Dorsolateral prefrontal cortex (tissue), 120 donors: ENCODE measurements at regions of chr11 and their contacts with region 1.

Region 1: GRCh38 chr11:119728651-119729580 is at the start of gene NECTIN1:
- DNase-seq: peak; percentile 80 to 92 (median 88)
- H3K4me3 ChIP-seq: peak within 1 kb of the TSS; percentile 61 to 95 (median 84)
- H3K27ac ChIP-seq: peak within 1 kb of the TSS; percentile 72 to 95 (median 90)
- H3K27me3 ChIP-seq: no peaks in the 10 kb centered on the region
- CTCF ChIP-seq: peak; percentile 77 to 99 (median 95)
- total RNA-seq, gene NECTIN1: 45.3 to 136 (median 78.1) TPM

Region 2: DNA sequence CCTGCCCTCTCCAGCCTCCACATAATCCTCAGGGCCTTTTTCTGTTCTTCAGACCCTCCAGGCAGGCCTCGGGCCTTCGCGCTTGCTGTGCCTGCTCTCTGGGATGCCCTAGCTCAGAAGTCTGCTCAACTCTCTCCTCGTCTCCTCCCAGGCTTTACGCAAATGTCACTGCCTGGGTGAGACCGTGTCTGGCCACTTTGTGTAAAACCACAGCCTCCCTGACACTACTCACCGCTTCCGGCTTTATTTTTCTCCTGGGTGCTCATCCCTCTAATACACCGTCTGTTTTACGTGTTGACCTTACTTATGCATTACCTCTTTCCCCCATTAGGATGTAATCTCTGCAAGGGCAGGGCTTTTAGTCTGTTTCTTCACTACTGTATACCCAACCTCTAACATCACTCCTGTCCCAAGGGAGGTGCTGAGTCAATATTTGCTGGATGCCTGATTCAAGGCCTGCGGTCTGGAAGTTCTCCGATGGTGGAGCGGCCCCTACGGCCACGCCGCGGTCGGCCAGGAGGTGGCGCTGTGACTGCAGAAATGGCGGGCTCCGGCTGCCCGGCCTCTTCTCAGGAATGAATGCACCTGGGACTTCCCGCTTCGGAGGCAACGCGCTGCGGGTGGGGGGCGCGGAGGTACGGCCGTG is 247.8 kb before region 1 on chr11:
- intact Hi-C with region 1: loop called (anchors 2 to 5 kb)
- DNase-seq: peak; percentile 67 to 93 (median 86)
- H3K4me3 ChIP-seq: peak overlapping the region in 43 of 59 donors; percentile 3 to 53 (median 33)
- H3K27ac ChIP-seq: peak overlapping the region in 3 of 59 donors; percentile 15 to 44 (median 22)
- H3K27me3 ChIP-seq: no peaks in the 10 kb centered on the region
- CTCF ChIP-seq: peak; percentile 87 to 100 (median 99)

Region 3: GRCh38 chr11:119533921-119534736 is 194.8 kb before region 1 on chr11:
- intact Hi-C with region 1: loop called in 1 of 2 experiments (anchors 5 kb)
- DNase-seq: peak; percentile 76 to 90 (median 82)
- H3K4me3 ChIP-seq: peak overlapping the region in 3 of 59 donors; percentile 1 to 11 (median 5)
- H3K27ac ChIP-seq: peak overlapping the region in 29 of 59 donors; percentile 2 to 73 (median 41)
- H3K27me3 ChIP-seq: no peaks in the 10 kb centered on the region
- CTCF ChIP-seq: peak; percentile 66 to 99 (median 93)

Region 4: DNA sequence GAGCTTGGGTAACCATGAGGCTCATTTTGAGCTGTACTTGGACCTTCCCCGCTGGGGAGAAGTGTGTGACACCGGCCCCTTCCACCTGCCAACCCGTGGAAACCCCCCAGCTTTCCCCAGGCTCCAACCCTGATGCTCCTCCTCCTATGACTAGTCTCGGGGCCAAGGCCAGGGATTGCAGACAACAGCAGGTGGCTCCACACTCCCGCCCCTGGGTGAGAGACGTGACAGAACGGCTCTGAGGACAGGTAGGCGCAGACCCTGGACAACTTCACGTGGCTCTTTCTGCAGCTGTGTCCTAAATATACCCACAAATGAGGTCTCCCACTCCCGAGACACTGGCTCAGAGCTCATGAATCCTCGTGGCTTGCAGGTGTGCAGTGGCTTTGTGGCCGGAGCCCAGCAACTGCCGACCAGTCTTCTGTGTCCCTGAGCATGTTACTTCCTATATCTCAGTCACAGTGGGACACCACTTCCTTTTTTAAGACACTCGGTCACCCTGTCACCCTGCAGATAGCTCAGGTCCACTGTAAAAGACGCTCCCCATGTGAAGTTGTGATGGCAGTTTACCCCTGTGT is 55.1 kb before region 1 on chr11:
- intact Hi-C with region 1: loop called in 1 of 2 experiments (anchors 1 kb)
- DNase-seq: no peak
- H3K4me3 ChIP-seq: no peak overlapping the region
- H3K27ac ChIP-seq: peak overlapping the region in 46 of 59 donors; percentile 22 to 96 (median 89)
- H3K27me3 ChIP-seq: no peaks in the 10 kb centered on the region
- CTCF ChIP-seq: peak in 3 of 56 donors; percentile 16 to 21 (median 16)

Region 5: GRCh38 chr11:119709638-119710346 is 19.1 kb before region 1 on chr11:
- intact Hi-C with region 1: no loop called
- DNase-seq: peak in 8 of 10 donors; percentile 66 to 87 (median 79)
- H3K4me3 ChIP-seq: peak overlapping the region in 27 of 59 donors; percentile 0 to 44 (median 22)
- H3K27ac ChIP-seq: peak overlapping the region in 56 of 59 donors; percentile 27 to 84 (median 70)
- H3K27me3 ChIP-seq: no peaks in the 10 kb centered on the region
- CTCF ChIP-seq: no peak

Region 6: GRCh38 chr11:119891055-119891768 is 162.3 kb after region 1 on chr11:
- intact Hi-C with region 1: loop called in 1 of 2 experiments (anchors 5 kb)
- DNase-seq: peak in 9 of 10 donors; percentile 67 to 94 (median 87)
- H3K4me3 ChIP-seq: peak overlapping the region in 5 of 59 donors; percentile 18 to 36 (median 22)
- H3K27ac ChIP-seq: peak overlapping the region in 58 of 59 donors; percentile 51 to 99 (median 94)
- H3K27me3 ChIP-seq: peaks cover 0 to 7% (median 0%) of the 10 kb centered on the region in 45 donors
- CTCF ChIP-seq: peak in 15 of 56 donors; percentile 8 to 41 (median 23)

Region 7: GRCh38 chr11:120108154-120108865 is 379.4 kb after region 1 on chr11:
- intact Hi-C with region 1: loop called (anchors 2 to 5 kb)
- DNase-seq: peak; percentile 78 to 90 (median 84)
- H3K4me3 ChIP-seq: peak overlapping the region in 1 of 59 donors; percentile 6
- H3K27ac ChIP-seq: peak overlapping the region in 52 of 59 donors; percentile 3 to 86 (median 64)
- H3K27me3 ChIP-seq: peaks cover 0 to 3% (median 0%) of the 10 kb centered on the region in 45 donors
- CTCF ChIP-seq: peak; percentile 93 to 100 (median 100)

Region 8: GRCh38 chr11:120172054-120172911 is 443.4 kb after region 1 on chr11:
- intact Hi-C with region 1: loop called in 1 of 2 experiments (anchors 5 kb)
- DNase-seq: peak in 9 of 10 donors; percentile 55 to 80 (median 72)
- H3K4me3 ChIP-seq: peak overlapping the region in 3 of 59 donors; percentile 11 to 26 (median 11)
- H3K27ac ChIP-seq: no peak overlapping the region
- H3K27me3 ChIP-seq: peaks cover 0 to 5% (median 0%) of the 10 kb centered on the region in 45 donors
- CTCF ChIP-seq: peak; percentile 69 to 98 (median 92)